PC-9 (cell line): ENCODE measurements at regions of chr6 and their contacts with region 1.

Region 1: DNA sequence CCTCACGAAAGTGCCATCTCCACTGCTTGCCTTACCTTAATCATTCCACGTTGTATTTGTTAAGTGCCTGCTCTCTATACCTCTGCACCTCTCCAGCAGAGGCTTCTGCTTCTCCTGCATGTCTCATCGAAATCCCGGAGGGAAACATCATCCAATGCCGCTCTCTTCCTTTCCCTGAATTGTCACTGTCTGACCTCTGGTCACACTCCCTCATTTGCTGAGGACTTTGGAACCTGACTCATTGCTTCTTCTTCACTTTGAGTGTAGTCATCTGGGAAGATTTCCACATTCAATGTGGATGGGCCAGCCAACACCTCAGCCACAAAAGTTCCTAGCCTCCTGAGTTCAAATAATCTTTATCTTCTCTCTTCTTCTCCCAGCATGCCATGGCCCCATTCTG is 78.9 kb upstream of the BEND6 start:
- DNase-seq: no peak
- H3K4me3 ChIP-seq: no peak overlapping the region
- H3K27ac ChIP-seq: no peak overlapping the region
- H3K4me1 ChIP-seq: no peaks in the 10 kb centered on the region
- H3K27me3 ChIP-seq: no peaks in the 10 kb centered on the region
- CTCF ChIP-seq: no peak

Region 2: GRCh38 chr6:56131435-56131834 is 744.5 kb before region 1 on chr6:
- CTCF ChIA-PET with region 1: no interaction called
- POLR2A ChIA-PET with region 1: no interaction called
- intact Hi-C with region 1: no loop called
- DNase-seq: no peak
- H3K4me3 ChIP-seq: no peak overlapping the region
- H3K27ac ChIP-seq: no peak overlapping the region
- H3K4me1 ChIP-seq: no peaks in the 10 kb centered on the region
- H3K27me3 ChIP-seq: no peaks in the 10 kb centered on the region
- CTCF ChIP-seq: no peak

Region 3: GRCh38 chr6:56742122-56742791 is 133.7 kb before region 1 on chr6:
- CTCF ChIA-PET with region 1: no interaction called
- POLR2A ChIA-PET with region 1: no interaction called
- intact Hi-C with region 1: no loop called
- DNase-seq: peak in 1 of 2 experiments; percentile 45
- H3K4me3 ChIP-seq: no peak overlapping the region
- H3K27ac ChIP-seq: no peak overlapping the region
- H3K4me1 ChIP-seq: 0 out of 2 replicates have a peak, but pooled peaks cover 9% of the 10 kb centered on the region
- H3K27me3 ChIP-seq: no peaks in the 10 kb centered on the region
- CTCF ChIP-seq: no peak

Region 4: DNA sequence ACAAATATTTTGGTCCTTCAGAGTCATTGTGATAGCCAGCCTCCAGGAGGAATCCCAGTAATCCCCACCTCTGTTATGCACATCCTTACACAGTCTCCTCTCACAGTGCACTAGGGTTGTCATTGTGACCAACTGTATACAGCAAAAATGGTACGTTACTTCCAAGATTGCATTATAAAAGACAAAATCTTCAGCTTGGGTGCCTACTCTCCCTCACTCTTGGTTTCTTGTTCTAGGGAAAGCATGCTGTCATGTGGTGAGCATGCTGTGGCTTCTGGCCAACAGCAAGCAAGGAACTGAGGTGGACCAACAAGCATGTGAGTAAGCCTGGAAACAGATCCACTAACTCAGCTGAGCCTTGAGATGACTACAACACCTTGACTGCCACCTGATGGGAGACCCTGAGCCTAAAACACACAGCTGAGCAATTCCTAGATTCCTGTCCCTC is 103.2 kb before region 1 on chr6:
- CTCF ChIA-PET with region 1: no interaction called
- POLR2A ChIA-PET with region 1: no interaction called
- intact Hi-C with region 1: no loop called
- DNase-seq: peak; percentile 29 to 47
- H3K4me3 ChIP-seq: no peak overlapping the region
- H3K27ac ChIP-seq: no peak overlapping the region
- H3K4me1 ChIP-seq: peaks cover 12% of the 10 kb centered on the region
- H3K27me3 ChIP-seq: no peaks in the 10 kb centered on the region
- CTCF ChIP-seq: no peak

Region 5: DNA sequence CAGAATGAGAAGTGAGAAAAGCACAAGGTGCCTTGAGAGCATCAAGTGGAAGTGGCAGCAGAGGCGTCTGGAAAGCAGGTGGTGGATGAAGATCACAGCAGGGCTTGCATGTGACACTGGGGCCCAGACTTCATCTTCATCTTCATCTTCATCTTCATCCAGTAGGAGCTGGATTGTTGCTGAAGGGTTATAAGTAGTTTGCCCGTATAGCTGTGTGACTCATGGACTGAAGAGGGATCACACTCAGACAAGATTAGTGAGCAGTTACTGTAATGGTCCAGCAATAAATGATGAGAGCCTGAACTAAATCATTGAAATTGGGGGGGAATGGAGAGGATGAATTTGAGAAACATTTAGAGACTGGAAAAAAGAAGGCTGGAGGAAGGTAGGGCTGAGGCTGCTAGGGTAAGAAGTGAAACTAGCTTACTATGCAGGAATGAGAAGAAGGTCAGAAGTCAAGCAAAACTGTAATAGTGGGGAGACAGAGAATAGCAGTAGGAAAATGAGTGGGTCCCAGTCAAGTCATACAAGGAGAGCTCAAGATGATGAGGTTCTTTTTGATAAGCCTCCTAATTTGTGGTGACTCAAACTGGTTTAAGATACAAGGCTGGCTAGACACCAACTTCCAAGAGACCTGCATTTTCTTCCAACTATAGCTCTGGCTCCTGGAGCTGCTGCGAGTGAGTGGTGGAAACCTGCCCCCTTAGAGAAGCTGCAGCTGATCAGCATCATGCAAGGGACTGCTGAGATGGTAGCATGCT is 13.4 kb before region 1 on chr6:
- CTCF ChIA-PET with region 1: no interaction called
- POLR2A ChIA-PET with region 1: no interaction called
- intact Hi-C with region 1: no loop called
- DNase-seq: no peak
- H3K4me3 ChIP-seq: no peak overlapping the region
- H3K27ac ChIP-seq: peak overlapping the region; percentile 90
- H3K4me1 ChIP-seq: peaks cover 81% of the 10 kb centered on the region
- H3K27me3 ChIP-seq: no peaks in the 10 kb centered on the region
- CTCF ChIP-seq: no peak

Region 6: GRCh38 chr6:56890683-56891429 is 14.9 kb after region 1 on chr6:
- CTCF ChIA-PET with region 1: interaction called, 17 read pairs
- POLR2A ChIA-PET with region 1: no interaction called
- intact Hi-C with region 1: no loop called
- DNase-seq: peak in 1 of 2 experiments; percentile 61
- H3K4me3 ChIP-seq: no peak overlapping the region
- H3K27ac ChIP-seq: peak overlapping the region; percentile 92
- H3K4me1 ChIP-seq: peaks cover 24% of the 10 kb centered on the region
- H3K27me3 ChIP-seq: no peaks in the 10 kb centered on the region
- CTCF ChIP-seq: no peak